Naive thymus-derived CD4-positive, alpha-beta T cell (primary cell): ENCODE measurements at regions of chr13 and their contacts with region 1.

Region 1: DNA sequence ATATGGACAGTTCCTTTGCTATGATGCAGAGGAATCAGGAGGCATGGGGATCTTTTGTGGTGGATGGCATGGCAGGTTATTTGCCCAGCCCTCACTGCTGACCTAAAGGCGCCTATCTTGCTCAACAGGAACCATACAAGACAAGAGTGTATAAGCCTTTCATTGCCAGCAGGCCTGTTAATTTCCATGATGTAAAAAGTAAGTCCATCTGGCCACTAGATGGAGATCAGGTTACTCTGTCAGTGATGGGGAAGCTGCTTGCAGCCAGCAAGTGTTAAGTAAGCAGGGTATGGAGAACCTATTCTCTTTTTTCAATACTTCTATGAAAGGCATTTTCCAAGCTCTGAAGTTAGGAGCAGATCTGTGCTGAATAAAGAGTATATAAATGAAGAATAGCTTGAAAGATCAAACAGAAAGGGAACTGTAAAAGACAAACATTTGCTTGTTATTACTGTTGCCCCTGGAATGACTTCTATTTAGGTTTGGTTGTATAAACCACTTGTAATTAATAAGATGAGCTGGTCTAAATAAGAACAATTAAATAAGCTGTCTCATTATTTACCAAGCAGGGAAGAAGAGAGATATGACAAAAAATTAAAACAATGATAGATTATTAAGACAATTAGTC is 210.9 kb downstream of the RGCC start:
- DNase-seq: peak in 6 of 9 donors; percentile 21 to 61 (median 45)
- ATAC-seq: peak; percentile 91
- H3K4me3 ChIP-seq: no peak overlapping the region
- H3K4me3 Mint-ChIP-seq: no peak overlapping the region
- H3K27ac ChIP-seq: no peak overlapping the region
- H3K27ac Mint-ChIP-seq: peak overlapping the region in 2 of 9 donors; percentile 0 to 9
- H3K4me1 ChIP-seq: no peaks in the 10 kb centered on the region
- H3K4me1 Mint-ChIP-seq: peaks cover 0 to 4% (median 0%) of the 10 kb centered on the region in 7 donors
- H3K27me3 ChIP-seq: no peaks in the 10 kb centered on the region
- H3K27me3 Mint-ChIP-seq: no peaks in the 10 kb centered on the region

Region 2: GRCh38 chr13:41905600-41906254 is 237.5 kb after region 1 on chr13:
- CTCF ChIA-PET with region 1: interaction called, 5 read pairs
- POLR2A ChIA-PET with region 1: no interaction called
- intact Hi-C with region 1: loop called in 1 of 2 experiments (anchors 1 kb)
- DNase-seq: peak in 6 of 9 donors; percentile 6 to 45 (median 26)
- ATAC-seq: peak; percentile 92
- H3K4me3 ChIP-seq: no peak overlapping the region
- H3K4me3 Mint-ChIP-seq: no peak overlapping the region
- H3K27ac ChIP-seq: no peak overlapping the region
- H3K27ac Mint-ChIP-seq: no peak overlapping the region
- H3K4me1 ChIP-seq: no peaks in the 10 kb centered on the region
- H3K4me1 Mint-ChIP-seq: peaks cover 0 to 12% (median 3%) of the 10 kb centered on the region in 7 donors
- H3K27me3 ChIP-seq: no peaks in the 10 kb centered on the region
- H3K27me3 Mint-ChIP-seq: no peaks in the 10 kb centered on the region

Region 3: GRCh38 chr13:42215578-42216421 is 547.6 kb after region 1 on chr13:
- CTCF ChIA-PET with region 1: no interaction called
- POLR2A ChIA-PET with region 1: no interaction called
- intact Hi-C with region 1: loop called (anchors 1 kb)
- DNase-seq: peak in 5 of 9 donors; percentile 3 to 20 (median 5)
- ATAC-seq: peak; percentile 42
- H3K4me3 ChIP-seq: no peak overlapping the region
- H3K4me3 Mint-ChIP-seq: no peak overlapping the region
- H3K27ac ChIP-seq: no peak overlapping the region
- H3K27ac Mint-ChIP-seq: peak overlapping the region in 1 of 9 donors; percentile 36
- H3K4me1 ChIP-seq: no peaks in the 10 kb centered on the region
- H3K4me1 Mint-ChIP-seq: no peaks in the 10 kb centered on the region
- H3K27me3 ChIP-seq: no peaks in the 10 kb centered on the region
- H3K27me3 Mint-ChIP-seq: no peaks in the 10 kb centered on the region